SK-N-SH (cell line): ENCODE measurements at regions of chr12 and their contacts with region 1.

Region 1: DNA sequence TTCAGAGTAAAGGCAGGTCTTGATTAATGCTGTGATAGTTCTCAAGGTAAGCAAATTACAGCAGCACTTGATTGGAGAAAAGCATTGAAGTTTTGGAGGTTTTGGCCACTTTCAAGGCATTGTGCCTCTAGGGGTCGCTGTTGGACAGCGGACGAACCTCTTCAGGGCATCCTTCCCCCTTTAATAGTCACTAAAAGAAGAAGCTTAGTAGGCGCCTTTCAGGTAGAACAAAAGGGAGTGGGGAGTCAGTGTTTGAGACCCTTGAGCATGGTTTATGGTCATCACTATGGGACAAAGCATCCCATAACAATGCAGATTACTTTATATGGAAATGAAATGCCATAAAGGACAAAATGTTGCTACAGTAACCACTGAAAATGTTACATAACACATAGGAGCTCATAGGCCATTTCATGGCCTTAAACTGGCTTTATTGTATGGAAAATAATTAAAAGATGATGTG is 199.5 kb upstream of the DCN start:
- DNase-seq: peak; percentile 22
- H3K4me3 ChIP-seq: peak overlapping the region; percentile 52 to 63
- H3K27ac ChIP-seq: peak overlapping the region; percentile 69 to 100
- H3K4me1 ChIP-seq: peaks cover 5 to 23% of the 10 kb centered on the region in 2 experiments; a peak in 3 of 4 replicates
- H3K27me3 ChIP-seq: no peaks in the 10 kb centered on the region
- CTCF ChIP-seq: peak; percentile 95
- EP300 ChIP-seq: no peak
- RAD21 ChIP-seq: peak; percentile 97

Region 2: GRCh38 chr12:91307957-91308670 is 74.0 kb before region 1 on chr12:
- CTCF ChIA-PET with region 1: no interaction called
- POLR2A ChIA-PET with region 1: no interaction called
- DNase-seq: no peak
- H3K4me3 ChIP-seq: no peak overlapping the region
- H3K27ac ChIP-seq: peak overlapping the region in 1 of 2 experiments; percentile 22; a peak in 1 of 4 replicates
- H3K4me1 ChIP-seq: no peaks in the 10 kb centered on the region
- H3K27me3 ChIP-seq: no peaks in the 10 kb centered on the region
- CTCF ChIP-seq: no peak
- EP300 ChIP-seq: no peak
- RAD21 ChIP-seq: no peak

Region 3: DNA sequence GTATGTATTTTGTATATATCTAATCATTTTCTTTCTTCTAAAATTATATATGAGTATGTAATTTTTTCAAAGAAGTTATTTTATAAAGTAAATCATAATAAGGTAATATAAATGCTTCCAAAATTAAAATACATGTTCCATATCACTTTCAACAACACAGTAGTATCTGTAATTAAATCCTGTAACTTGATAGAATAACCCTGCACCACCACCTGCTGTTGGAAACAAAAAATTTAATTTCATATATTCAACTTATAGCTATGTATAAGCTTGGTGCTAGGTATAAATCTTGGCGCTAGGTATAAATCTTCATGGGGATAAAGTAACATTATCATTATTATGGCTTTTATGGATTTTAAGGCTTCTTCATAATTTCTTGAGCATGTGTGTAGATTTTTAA is 49.8 kb before region 1 on chr12:
- CTCF ChIA-PET with region 1: no interaction called
- POLR2A ChIA-PET with region 1: no interaction called
- DNase-seq: no peak
- H3K4me3 ChIP-seq: no peak overlapping the region
- H3K27ac ChIP-seq: no peak overlapping the region
- H3K4me1 ChIP-seq: no peaks in the 10 kb centered on the region; a peak in 1 of 4 replicates
- H3K27me3 ChIP-seq: no peaks in the 10 kb centered on the region
- CTCF ChIP-seq: peak; percentile 43
- EP300 ChIP-seq: no peak
- RAD21 ChIP-seq: peak; percentile 59

Region 4: DNA sequence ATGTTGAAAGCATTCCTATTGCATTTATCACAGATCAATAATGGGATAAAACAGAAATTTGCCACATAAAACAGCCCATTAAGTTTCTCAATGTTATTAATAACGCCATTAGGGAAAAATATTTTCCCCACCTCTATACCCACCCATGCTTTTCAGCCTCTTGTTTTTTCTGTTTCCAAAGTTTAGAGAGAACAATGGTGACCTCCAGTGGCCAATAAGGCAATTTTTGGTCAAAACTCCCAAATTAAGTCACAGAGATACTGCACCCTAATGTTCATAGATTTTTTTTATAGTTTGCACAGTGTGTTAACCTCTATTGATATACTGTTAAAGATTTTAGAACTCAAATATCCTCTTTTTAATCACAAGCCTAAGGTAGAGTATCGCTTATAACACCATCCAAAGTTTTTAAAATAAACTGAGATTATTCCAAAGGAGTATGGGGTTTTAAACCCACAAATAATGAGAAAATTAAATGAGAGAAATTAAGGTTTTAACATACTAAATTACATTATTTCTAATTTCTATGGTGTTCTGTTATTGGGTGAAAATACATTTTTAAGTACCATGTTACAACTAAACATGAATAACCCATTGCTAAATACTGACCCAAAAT is 14.8 kb before region 1 on chr12:
- CTCF ChIA-PET with region 1: interaction called, 22 read pairs
- POLR2A ChIA-PET with region 1: no interaction called
- DNase-seq: no peak
- H3K4me3 ChIP-seq: no peak overlapping the region
- H3K27ac ChIP-seq: no peak overlapping the region
- H3K4me1 ChIP-seq: no peaks in the 10 kb centered on the region; a peak in 1 of 4 replicates
- H3K27me3 ChIP-seq: no peaks in the 10 kb centered on the region
- CTCF ChIP-seq: peak; percentile 70
- EP300 ChIP-seq: no peak
- RAD21 ChIP-seq: peak; percentile 59

Region 5: DNA sequence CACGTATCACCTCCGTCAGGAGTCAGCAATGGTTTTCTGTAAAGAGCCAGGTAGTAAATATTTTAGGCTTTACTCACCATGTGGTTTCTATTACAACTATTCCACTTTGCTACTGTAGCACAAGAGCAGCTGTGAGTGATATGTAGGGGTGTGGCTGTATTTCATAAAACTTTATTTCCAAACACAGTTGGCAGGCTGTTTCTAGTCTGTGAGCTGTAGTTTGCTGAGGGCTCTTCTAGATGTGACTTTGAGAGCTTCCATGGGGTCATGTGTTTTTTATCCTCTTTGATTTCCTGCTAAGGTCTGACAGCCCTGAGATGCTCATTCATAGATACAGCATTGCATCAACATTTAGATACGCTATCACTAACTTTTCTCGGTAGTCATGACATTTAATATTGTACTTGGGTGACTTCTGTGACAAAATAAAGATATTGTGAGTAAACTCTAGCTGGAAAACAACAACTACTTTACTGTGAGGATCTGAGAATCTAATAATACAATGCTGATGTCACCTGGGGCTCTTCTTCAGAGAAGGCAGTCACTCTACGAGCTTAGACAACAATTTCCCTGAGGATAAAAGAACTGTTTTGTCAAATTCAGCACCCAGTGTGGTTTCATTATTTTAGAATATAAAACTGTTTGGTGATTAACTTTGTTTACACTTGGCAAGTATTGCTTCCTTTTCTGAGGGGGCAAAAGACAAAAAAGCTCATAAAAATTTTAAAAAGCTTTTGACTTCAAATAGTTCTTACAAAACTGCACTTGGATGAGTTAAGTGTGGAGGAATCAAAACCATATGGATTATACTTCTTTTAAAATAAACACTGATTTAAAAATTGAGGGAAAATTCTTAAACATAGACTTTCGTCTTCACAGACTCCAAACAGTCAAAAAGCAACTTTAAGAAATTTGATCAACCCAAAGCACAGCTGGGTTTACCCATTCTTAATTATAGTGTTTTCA is 31.8 kb after region 1 on chr12:
- CTCF ChIA-PET with region 1: interaction called, 23 read pairs
- POLR2A ChIA-PET with region 1: interaction called, 15 read pairs
- DNase-seq: peak; percentile 57
- H3K4me3 ChIP-seq: no peak overlapping the region
- H3K27ac ChIP-seq: peak overlapping the region in 1 of 2 experiments; percentile 96; a peak in 2 of 4 replicates
- H3K4me1 ChIP-seq: peaks cover 0 to 9% of the 10 kb centered on the region in 2 experiments; a peak in 1 of 4 replicates
- H3K27me3 ChIP-seq: no peaks in the 10 kb centered on the region
- CTCF ChIP-seq: no peak
- EP300 ChIP-seq: peak; percentile 13 to 98; a peak in 2 of 4 replicates
- RAD21 ChIP-seq: peak; percentile 38

Region 6: DNA sequence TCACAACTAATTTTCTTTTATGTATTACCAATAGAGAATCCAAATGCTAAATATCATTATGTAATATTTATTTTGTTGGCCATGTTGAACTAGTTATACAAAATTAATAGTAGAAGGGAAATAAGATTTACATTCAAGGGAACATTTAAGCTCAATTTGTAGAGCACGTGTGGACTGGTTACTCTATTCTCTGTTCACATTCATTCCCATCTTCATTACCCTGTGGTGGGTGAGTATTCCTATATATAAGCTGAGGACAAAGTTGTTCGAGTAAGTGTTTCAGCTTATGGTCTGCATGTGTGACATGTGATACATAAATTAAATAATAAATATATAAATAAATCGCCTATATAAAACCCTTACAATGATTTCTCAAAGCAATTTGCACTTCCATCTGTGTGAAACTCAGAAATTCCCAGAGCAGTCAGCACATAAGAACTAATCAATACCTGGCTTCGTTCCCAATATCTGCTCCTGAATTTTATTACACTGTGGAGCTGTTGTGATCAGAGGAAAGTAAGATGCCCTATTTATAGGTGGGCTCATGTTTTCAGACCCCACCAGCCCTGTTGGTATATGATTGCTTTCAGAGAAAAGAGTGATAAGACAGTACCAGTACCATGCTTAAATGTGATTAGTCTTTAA is 108.7 kb after region 1 on chr12:
- CTCF ChIA-PET with region 1: no interaction called
- POLR2A ChIA-PET with region 1: no interaction called
- DNase-seq: no peak
- H3K4me3 ChIP-seq: no peak overlapping the region
- H3K27ac ChIP-seq: no peak overlapping the region
- H3K4me1 ChIP-seq: no peaks in the 10 kb centered on the region
- H3K27me3 ChIP-seq: no peaks in the 10 kb centered on the region
- CTCF ChIP-seq: no peak
- EP300 ChIP-seq: no peak
- RAD21 ChIP-seq: no peak

Region 7: GRCh38 chr12:91577586-91578539 is 195.8 kb after region 1 on chr12:
- CTCF ChIA-PET with region 1: interaction called, 72 read pairs
- POLR2A ChIA-PET with region 1: interaction called, 11 read pairs
- DNase-seq: peak; percentile 16
- H3K4me3 ChIP-seq: peak overlapping the region; percentile 29 to 38; a peak in 2 of 4 replicates
- H3K27ac ChIP-seq: peak overlapping the region; percentile 8 to 99; a peak in 3 of 4 replicates
- H3K4me1 ChIP-seq: peaks cover 9 to 23% of the 10 kb centered on the region in 2 experiments; a peak in 3 of 4 replicates
- H3K27me3 ChIP-seq: no peaks in the 10 kb centered on the region
- CTCF ChIP-seq: peak; percentile 74
- EP300 ChIP-seq: no peak
- RAD21 ChIP-seq: peak; percentile 66

Region 8: GRCh38 chr12:91890742-91891141 is 508.6 kb after region 1 on chr12:
- CTCF ChIA-PET with region 1: no interaction called
- POLR2A ChIA-PET with region 1: no interaction called
- DNase-seq: no peak
- H3K4me3 ChIP-seq: no peak overlapping the region
- H3K27ac ChIP-seq: no peak overlapping the region
- H3K4me1 ChIP-seq: no peaks in the 10 kb centered on the region; a peak in 1 of 4 replicates
- H3K27me3 ChIP-seq: no peaks in the 10 kb centered on the region
- CTCF ChIP-seq: no peak
- EP300 ChIP-seq: no peak
- RAD21 ChIP-seq: no peak

Region 9: DNA sequence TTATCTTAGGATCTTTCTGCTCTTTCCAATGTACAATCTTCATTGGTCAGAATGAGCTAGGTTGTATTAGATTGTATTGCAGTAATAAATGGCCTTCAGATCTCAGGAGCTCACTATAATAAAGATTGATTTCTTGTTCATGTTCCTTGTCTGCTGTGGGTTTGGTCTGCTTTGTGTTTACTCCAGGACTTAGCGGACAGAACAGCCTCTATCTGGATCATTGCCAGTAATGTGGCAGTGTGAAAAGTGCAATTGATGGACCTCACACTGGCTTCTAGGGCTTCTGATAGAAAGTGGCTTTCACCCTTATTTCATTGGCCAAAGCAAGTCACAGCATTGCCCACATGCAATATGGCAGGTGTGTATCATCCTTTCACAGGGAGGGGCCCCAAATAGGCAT is 682.3 kb after region 1 on chr12:
- CTCF ChIA-PET with region 1: interaction called, 10 read pairs
- POLR2A ChIA-PET with region 1: no interaction called
- DNase-seq: no peak
- H3K4me3 ChIP-seq: no peak overlapping the region
- H3K27ac ChIP-seq: peak overlapping the region in 1 of 2 experiments; percentile 34; a peak in 1 of 4 replicates
- H3K4me1 ChIP-seq: peaks cover 9 to 18% of the 10 kb centered on the region in 2 experiments; a peak in 3 of 4 replicates
- H3K27me3 ChIP-seq: no peaks in the 10 kb centered on the region
- CTCF ChIP-seq: no peak
- EP300 ChIP-seq: peak in 1 of 2 experiments; percentile 28; a peak in 1 of 4 replicates
- RAD21 ChIP-seq: no peak

Region 10: GRCh38 chr12:92145731-92146496 is 763.8 kb after region 1 on chr12 and contains the start of gene BTG1:
- CTCF ChIA-PET with region 1: interaction called, 50 read pairs
- POLR2A ChIA-PET with region 1: interaction called, 66 read pairs
- DNase-seq: peak; percentile 94
- H3K4me3 ChIP-seq: peak within 1 kb of the TSS; percentile 89 to 98
- H3K27ac ChIP-seq: peak within 1 kb of the TSS; percentile 91 to 97
- H3K4me1 ChIP-seq: peaks cover 6 to 10% of the 10 kb centered on the region in 2 experiments; a peak in 3 of 4 replicates
- H3K27me3 ChIP-seq: no peaks in the 10 kb centered on the region
- CTCF ChIP-seq: no peak
- EP300 ChIP-seq: no peak
- RAD21 ChIP-seq: 0 out of 2 replicates have a peak, but pooled peaks have one; percentile 24
- polyA plus RNA-seq, gene BTG1: 16.2 and 28.3 TPM in 2 replicates

Region 11: DNA sequence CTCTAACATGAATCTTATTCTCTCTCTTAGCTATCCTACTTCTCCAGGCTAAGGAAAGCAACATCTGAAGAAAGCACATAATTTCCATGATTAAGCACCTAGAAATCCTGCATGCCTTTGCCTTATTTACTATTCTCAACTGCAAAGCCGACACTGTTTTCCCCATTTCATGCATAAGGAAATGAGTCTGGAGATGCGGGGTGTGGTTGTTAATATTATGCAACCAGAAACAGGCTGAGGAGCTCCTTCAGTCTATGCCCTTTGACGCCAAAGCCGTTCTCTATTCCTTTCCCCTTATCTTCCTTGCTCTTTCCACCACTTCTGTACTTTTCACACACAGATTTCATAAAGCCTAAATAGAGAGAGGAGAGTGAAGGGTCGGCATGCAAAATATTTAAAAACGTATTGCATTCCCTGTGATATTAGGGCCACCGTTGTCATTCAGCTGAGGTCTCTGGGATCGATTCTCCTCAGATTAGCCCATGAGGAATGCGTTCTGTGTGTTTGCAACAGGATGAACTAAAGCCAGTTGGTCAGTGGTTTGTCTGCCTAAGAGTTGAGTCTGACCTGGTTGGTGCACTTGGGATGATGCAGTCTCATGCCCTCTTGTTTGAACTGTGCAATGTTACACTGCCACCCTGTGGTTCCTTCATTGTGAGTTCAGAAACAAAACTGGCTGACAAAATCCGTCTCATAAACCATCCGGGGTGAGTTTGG is 1267.6 kb after region 1 on chr12:
- CTCF ChIA-PET with region 1: interaction called, 18 read pairs
- POLR2A ChIA-PET with region 1: no interaction called
- DNase-seq: peak; percentile 65
- H3K4me3 ChIP-seq: no peak overlapping the region; a peak in 1 of 4 replicates
- H3K27ac ChIP-seq: no peak overlapping the region
- H3K4me1 ChIP-seq: no peaks in the 10 kb centered on the region; a peak in 1 of 4 replicates
- H3K27me3 ChIP-seq: no peaks in the 10 kb centered on the region
- CTCF ChIP-seq: peak; percentile 80
- EP300 ChIP-seq: no peak
- RAD21 ChIP-seq: peak; percentile 94